A549 (cell line): ENCODE measurements at regions of chr9 and their contacts with region 1.

Region 1: GRCh38 chr9:36450110-36450732 is 50.2 kb upstream of the RNF38 start:
- DNase-seq: peak; percentile 38 to 60
- ATAC-seq: peak; percentile 59 to 66; a peak in 3 of 6 replicates
- H3K4me3 ChIP-seq: no peak overlapping the region
- H3K27ac ChIP-seq: no peak overlapping the region
- H3K4me1 ChIP-seq: peaks cover 4% of the 10 kb centered on the region; the same call in 1 of the 3 replicates
- CTCF ChIP-seq: peak; percentile 96
- EP300 ChIP-seq: no peak
- POLR2A ChIP-seq: no peak
- RAD21 ChIP-seq: peak; percentile 82 to 91

Region 2: GRCh38 chr9:36423206-36423605 is 27.0 kb before region 1 on chr9:
- CTCF ChIA-PET with region 1: interaction called, 24 read pairs
- POLR2A ChIA-PET with region 1: no interaction called
- DNase-seq: no peak
- ATAC-seq: no peak
- H3K4me3 ChIP-seq: no peak overlapping the region
- H3K27ac ChIP-seq: no peak overlapping the region
- H3K4me1 ChIP-seq: peaks cover 37% of the 10 kb centered on the region
- CTCF ChIP-seq: no peak
- EP300 ChIP-seq: no peak
- POLR2A ChIP-seq: no peak
- RAD21 ChIP-seq: no peak

Region 3: GRCh38 chr9:36461323-36461722 is 11.1 kb after region 1 on chr9:
- CTCF ChIA-PET with region 1: interaction called, 23 read pairs
- POLR2A ChIA-PET with region 1: no interaction called
- DNase-seq: no peak
- ATAC-seq: no peak
- H3K4me3 ChIP-seq: no peak overlapping the region
- H3K27ac ChIP-seq: no peak overlapping the region
- H3K4me1 ChIP-seq: no peaks in the 10 kb centered on the region
- CTCF ChIP-seq: no peak
- EP300 ChIP-seq: no peak
- POLR2A ChIP-seq: no peak
- RAD21 ChIP-seq: no peak

Region 4: GRCh38 chr9:36479101-36479500 is 28.9 kb after region 1 on chr9:
- CTCF ChIA-PET with region 1: interaction called, 19 read pairs
- POLR2A ChIA-PET with region 1: no interaction called
- DNase-seq: no peak
- ATAC-seq: no peak
- H3K4me3 ChIP-seq: no peak overlapping the region
- H3K27ac ChIP-seq: no peak overlapping the region
- H3K4me1 ChIP-seq: no peaks in the 10 kb centered on the region
- CTCF ChIP-seq: no peak
- EP300 ChIP-seq: no peak
- POLR2A ChIP-seq: no peak
- RAD21 ChIP-seq: no peak

Region 5: GRCh38 chr9:36560857-36561221 is 110.6 kb after region 1 on chr9:
- CTCF ChIA-PET with region 1: interaction called, 19 read pairs
- POLR2A ChIA-PET with region 1: no interaction called
- DNase-seq: no peak
- ATAC-seq: no peak; a peak in 1 of 6 replicates
- H3K4me3 ChIP-seq: no peak overlapping the region
- H3K27ac ChIP-seq: no peak overlapping the region
- H3K4me1 ChIP-seq: peaks cover 4% of the 10 kb centered on the region; the same call in 1 of the 3 replicates
- CTCF ChIP-seq: no peak
- EP300 ChIP-seq: no peak
- POLR2A ChIP-seq: no peak
- RAD21 ChIP-seq: no peak